ENCODE measurements at regions of chr7 and their contacts with region 1.

Region 1: GRCh38 chr7:101815835-101816493 is 1.5 kb upstream of the CUX1 start:
- DNase-seq: peak; percentile 82 to 89 (median 85)
- ATAC-seq: peak; percentile 56
- H3K4me3 ChIP-seq: peak overlapping the region; percentile 68
- H3K27ac ChIP-seq: peak overlapping the region; percentile 76
- H3K4me1 ChIP-seq: peaks cover 27 to 34% of the 10 kb centered on the region in 2 experiments
- H3K27me3 ChIP-seq: no peaks in the 10 kb centered on the region
- CTCF ChIP-seq: peak in 2 of 3 experiments; percentile 31 to 35; a peak in 2 of 6 replicates
- EP300 ChIP-seq: no peak
- POLR2A ChIP-seq: no peak
- RAD21 ChIP-seq: no peak

Region 2: GRCh38 chr7:101602484-101603241 is 213.3 kb before region 1 on chr7:
- CTCF ChIA-PET with region 1: interaction called, 9 read pairs
- POLR2A ChIA-PET with region 1: no interaction called
- in situ Hi-C with region 1: no loop called
- intact Hi-C with region 1: loop called (anchors 5 kb)
- DNase-seq: peak; percentile 80 to 91 (median 88)
- ATAC-seq: peak; percentile 97
- H3K4me3 ChIP-seq: no peak overlapping the region
- H3K27ac ChIP-seq: no peak overlapping the region
- H3K4me1 ChIP-seq: peaks cover 0 to 21% of the 10 kb centered on the region in 2 experiments; a peak in 2 of 5 replicates
- H3K27me3 ChIP-seq: peaks cover 0 to 60% of the 10 kb centered on the region in 2 experiments; a peak in 4 of 5 replicates
- CTCF ChIP-seq: peak; percentile 93 to 95 (median 94)
- EP300 ChIP-seq: no peak
- POLR2A ChIP-seq: no peak
- RAD21 ChIP-seq: peak; percentile 84 to 92

Region 3: DNA sequence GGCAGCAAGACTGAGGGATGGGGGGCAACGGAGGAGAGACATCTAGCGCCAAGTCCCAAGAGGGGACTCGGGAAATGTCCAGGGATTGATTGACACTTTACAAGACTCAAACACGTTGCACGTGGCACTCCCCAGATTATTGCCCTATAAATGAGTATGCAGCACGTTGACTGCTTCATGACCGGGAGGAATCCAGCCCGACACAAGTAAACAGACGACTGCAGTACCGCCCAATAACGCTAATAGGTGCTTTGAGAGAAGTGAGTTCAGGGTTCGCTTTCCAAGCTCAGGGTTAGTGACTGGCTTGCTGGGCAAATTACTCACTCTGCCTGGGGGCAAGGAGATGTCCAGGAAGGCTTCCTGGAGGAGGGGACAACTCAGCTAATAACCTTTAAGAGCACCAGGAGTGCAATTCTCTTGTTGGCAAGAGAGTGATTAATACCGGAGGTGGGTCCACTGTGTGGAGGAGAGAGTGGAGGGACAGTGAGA is 113.6 kb before region 1 on chr7:
- CTCF ChIA-PET with region 1: no interaction called
- POLR2A ChIA-PET with region 1: no interaction called
- in situ Hi-C with region 1: loop called (anchors 5 kb)
- intact Hi-C with region 1: loop called (anchors 5 kb)
- DNase-seq: peak in 2 of 4 experiments; percentile 39 to 41
- ATAC-seq: peak; percentile 79
- H3K4me3 ChIP-seq: no peak overlapping the region
- H3K27ac ChIP-seq: no peak overlapping the region
- H3K4me1 ChIP-seq: peaks cover 0 to 7% of the 10 kb centered on the region in 2 experiments; a peak in 2 of 5 replicates
- H3K27me3 ChIP-seq: peaks cover 39 to 66% of the 10 kb centered on the region in 2 experiments
- CTCF ChIP-seq: peak in 2 of 3 experiments; percentile 19 to 26; a peak in 4 of 6 replicates
- EP300 ChIP-seq: no peak
- POLR2A ChIP-seq: no peak
- RAD21 ChIP-seq: no peak; a peak in 1 of 4 replicates

Region 4: DNA sequence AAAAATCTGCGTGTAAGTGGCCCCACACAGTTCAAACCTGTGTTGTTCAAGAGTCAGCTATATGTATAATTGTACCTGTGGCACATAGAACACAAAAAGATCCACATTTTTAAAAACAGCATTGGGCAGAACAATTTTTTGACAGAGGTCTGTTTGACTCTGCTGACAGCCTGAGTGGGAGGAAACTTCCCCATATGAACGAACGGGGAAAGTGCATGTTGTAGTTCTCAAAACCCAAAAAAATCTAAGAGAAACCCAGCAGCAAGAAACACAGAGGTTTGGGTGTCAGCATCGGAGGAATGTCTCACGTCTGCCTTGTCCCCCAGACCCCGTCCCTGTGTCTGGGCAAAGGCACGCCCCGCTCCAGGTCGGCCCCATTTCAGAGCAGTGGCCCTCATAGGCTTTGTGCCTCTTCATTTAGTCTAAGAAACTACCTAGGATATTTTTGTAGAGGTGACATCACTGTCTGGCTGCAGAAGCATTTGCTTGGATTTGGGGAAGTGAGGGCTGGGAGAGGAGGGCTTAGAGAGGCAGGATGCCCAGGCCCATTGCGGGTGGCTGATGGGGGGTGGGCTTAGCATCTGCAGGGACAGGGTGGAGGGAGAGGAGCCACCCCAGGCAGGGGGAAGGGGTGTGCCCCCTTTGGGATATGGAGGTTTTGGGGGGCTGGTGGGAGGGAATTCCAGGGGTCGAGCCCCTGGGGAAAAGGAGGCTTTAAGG is 12.5 kb after region 1 on chr7:
- CTCF ChIA-PET with region 1: no interaction called
- POLR2A ChIA-PET with region 1: interaction called, 20 read pairs
- in situ Hi-C with region 1: no loop called
- intact Hi-C with region 1: no loop called
- DNase-seq: no peak
- ATAC-seq: no peak
- H3K4me3 ChIP-seq: no peak overlapping the region
- H3K27ac ChIP-seq: no peak overlapping the region
- H3K4me1 ChIP-seq: peaks cover 0 to 21% of the 10 kb centered on the region in 2 experiments; a peak in 3 of 5 replicates
- H3K27me3 ChIP-seq: no peaks in the 10 kb centered on the region
- CTCF ChIP-seq: no peak
- EP300 ChIP-seq: no peak
- POLR2A ChIP-seq: no peak
- RAD21 ChIP-seq: no peak

Region 5: DNA sequence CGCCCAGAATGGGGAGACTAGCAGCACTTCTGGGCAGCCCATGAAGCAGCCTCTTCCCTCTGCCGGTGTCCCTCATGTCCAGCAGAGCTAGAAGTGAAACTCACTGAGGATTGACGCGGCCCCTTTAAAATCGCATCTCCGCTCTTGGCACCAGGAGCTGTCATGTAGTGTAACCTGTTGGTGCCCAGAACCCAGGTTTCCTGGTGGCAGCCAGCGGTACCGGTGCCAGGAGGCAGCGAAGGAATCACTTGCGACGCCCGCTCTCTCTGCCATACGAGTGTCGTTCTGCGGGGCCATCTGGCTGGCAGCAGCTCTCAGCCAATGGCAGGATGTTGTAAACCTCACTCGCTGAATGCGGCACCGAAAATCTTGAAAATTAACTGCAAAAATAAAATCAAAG is 84.1 kb after region 1 on chr7:
- CTCF ChIA-PET with region 1: no interaction called
- POLR2A ChIA-PET with region 1: no interaction called
- in situ Hi-C with region 1: no loop called
- intact Hi-C with region 1: loop called (anchors 5 kb)
- DNase-seq: no peak
- ATAC-seq: no peak
- H3K4me3 ChIP-seq: no peak overlapping the region
- H3K27ac ChIP-seq: no peak overlapping the region
- H3K4me1 ChIP-seq: peaks cover 37 to 43% of the 10 kb centered on the region in 2 experiments
- H3K27me3 ChIP-seq: no peaks in the 10 kb centered on the region
- CTCF ChIP-seq: no peak
- EP300 ChIP-seq: no peak
- POLR2A ChIP-seq: no peak
- RAD21 ChIP-seq: no peak

Region 6: DNA sequence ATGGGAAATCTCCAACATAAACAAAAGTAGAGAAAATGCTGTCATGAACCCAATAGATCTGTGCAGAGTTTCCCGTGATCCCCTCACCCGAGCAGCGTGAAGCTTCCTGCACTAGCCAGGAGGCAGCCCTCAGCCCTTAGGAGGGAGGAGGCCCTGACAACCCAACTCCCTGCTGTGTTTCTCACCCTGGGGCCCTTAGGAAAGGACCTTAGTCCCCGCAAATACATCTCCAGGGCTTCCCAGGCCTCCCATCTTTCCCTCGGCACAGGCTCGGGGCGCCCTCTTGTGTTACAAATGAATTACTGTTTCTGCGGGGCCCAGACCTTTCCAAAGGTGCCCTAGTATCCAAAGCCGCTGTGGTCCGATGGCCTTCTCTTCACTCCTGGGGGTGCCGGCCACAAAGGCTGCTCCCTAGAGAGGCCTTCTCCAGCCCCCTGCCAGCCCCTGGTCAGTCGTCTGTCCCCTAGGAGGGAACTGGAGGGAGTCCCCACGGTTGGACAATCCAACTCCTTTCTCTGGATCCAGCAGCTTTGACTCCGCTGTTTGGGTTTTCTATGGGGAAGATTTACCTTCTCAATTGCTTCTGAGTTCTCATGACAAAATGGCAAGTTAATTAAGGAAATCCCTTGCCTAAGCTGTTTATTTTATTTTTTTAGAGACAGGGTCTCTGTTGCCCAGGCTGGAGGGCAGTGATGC is 420.8 kb after region 1 on chr7:
- CTCF ChIA-PET with region 1: interaction called, 3 read pairs
- POLR2A ChIA-PET with region 1: no interaction called
- in situ Hi-C with region 1: no loop called
- intact Hi-C with region 1: loop called (anchors 5 kb)
- DNase-seq: peak; percentile 81 to 88 (median 86)
- ATAC-seq: peak; percentile 98
- H3K4me3 ChIP-seq: no peak overlapping the region
- H3K27ac ChIP-seq: no peak overlapping the region
- H3K4me1 ChIP-seq: peaks cover 0 to 6% of the 10 kb centered on the region in 2 experiments; a peak in 1 of 5 replicates
- H3K27me3 ChIP-seq: no peaks in the 10 kb centered on the region
- CTCF ChIP-seq: peak; percentile 85 to 94 (median 90)
- EP300 ChIP-seq: no peak
- POLR2A ChIP-seq: no peak
- RAD21 ChIP-seq: peak; percentile 93

Measured in K562 (cell line).